ENCODE measurements at regions of chr7 and their contacts with region 1.

Region 1: DNA sequence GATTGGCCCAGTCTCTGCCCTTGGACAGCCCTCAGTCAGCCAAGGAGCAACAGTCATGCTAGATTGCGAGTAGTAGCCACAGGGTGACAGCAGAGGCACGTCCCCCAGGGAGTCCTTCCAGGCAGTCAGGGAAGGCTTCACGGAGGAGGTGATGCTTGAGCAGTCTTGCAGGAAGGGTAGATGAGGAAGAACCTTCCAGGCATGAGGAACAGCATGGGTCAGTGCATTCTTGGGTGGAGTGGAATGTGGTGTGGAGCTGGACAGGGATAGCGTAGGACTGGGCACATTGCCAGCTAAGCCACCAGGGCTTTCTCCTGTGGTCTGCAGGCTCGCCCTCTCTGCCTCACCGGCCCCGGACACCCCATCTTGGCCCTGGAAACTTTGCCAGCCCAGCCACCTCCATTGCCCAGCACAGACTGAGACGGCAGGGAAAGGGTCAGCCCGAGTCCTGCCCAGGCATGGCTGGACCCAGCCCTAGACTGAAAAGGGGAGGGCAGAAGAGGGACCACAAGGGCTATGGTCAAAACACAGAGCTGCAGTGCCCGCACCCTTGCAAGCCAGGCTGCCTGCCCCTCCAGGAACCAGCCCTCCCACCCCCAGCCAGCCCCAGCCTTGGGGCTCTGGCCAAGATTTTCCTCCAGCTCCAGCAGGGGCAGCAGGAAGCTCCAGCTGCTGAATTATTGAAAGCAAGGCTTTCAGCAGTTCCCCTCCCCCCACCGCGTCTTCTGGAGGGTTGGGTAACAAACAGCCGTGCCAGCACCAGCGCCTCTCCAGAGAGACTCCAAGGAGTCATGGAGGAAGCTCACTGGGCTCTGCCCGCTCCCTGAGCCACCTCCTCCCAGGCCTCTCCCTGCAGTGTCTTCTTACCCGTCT is 18.7 kb downstream of the SRRM3 start:
- DNase-seq: peak; percentile 4
- H3K4me3 ChIP-seq: no peak overlapping the region
- CTCF ChIP-seq: peak; percentile 8

Region 2: GRCh38 chr7:76166404-76167255 is 53.8 kb before region 1 on chr7:
- in situ Hi-C with region 1: no loop called
- DNase-seq: peak; percentile 81
- H3K4me3 ChIP-seq: peak overlapping the region; percentile 55
- CTCF ChIP-seq: peak; percentile 23

Region 3: GRCh38 chr7:76282344-76283253 is 62.2 kb after region 1 on chr7:
- in situ Hi-C with region 1: loop called (anchors 10 kb)
- DNase-seq: no peak
- H3K4me3 ChIP-seq: peak overlapping the region; percentile 23
- CTCF ChIP-seq: no peak

Region 4: GRCh38 chr7:77315182-77315591 is 1094.8 kb after region 1 on chr7:
- in situ Hi-C with region 1: no loop called
- DNase-seq: no peak
- H3K4me3 ChIP-seq: no peak overlapping the region
- CTCF ChIP-seq: no peak

Measured in astrocyte of the cerebellum (primary cell).